Right cardiac atrium (tissue), 5 donors: ENCODE measurements at regions of chr7 and their contacts with region 1.

Region 1: DNA sequence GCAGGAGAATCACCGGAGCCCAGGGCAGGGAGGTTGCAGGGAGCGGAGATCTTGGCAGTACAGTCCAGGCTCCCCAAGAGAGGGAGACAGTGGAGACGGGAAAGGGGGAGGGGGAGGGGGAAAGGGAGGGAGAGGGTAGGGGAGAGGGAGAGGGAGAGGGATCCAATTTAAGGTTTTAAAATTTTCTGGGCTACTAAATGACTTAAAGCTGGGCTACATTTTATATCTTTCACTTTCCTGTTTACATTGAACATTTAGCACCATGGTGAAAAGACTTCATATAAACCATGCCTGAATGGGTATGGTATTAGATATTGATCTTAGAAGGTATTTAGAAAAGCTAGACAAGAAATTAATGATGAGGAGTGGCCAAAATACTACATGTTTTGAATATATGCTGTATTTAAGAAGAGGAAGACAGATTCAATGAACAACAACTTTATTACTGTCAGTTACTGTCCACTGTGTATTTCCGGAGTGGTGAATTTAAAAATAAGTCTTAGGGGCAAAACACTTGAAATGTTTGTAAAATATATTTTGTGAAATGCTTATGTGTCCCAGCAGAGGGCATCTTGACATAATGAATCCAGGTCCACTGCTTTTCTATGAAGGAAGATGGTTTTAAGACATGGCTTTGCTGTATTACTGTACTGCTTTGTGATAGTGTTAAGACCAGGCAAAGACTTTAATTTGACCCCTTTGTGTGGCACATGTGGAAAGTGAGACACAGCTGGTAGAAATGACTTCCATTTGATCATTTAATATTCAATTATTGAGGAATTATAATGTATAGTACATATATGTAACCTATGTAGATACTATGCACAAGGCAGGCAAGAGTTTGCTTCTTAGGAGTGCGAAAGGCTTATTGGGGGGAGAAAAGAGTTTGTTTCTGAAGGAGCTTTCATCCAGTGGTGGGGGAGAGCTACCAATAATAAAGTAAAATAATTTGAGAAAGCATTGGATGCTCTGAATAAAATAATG is 52.8 kb downstream of the NRF1 start:
- DNase-seq: no peak
- ATAC-seq: peak in 1 of 2 donors; percentile 41
- H3K4me3 ChIP-seq: no peak overlapping the region
- H3K27ac ChIP-seq: no peak overlapping the region
- H3K4me1 ChIP-seq: no peaks in the 10 kb centered on the region
- H3K27me3 ChIP-seq: no peaks in the 10 kb centered on the region

Region 2: GRCh38 chr7:129530795-129531391 is 133.4 kb before region 1 on chr7:
- intact Hi-C with region 1: no loop called
- DNase-seq: no peak
- ATAC-seq: no peak
- H3K4me3 ChIP-seq: no peak overlapping the region
- H3K27ac ChIP-seq: no peak overlapping the region
- H3K4me1 ChIP-seq: no peaks in the 10 kb centered on the region
- H3K27me3 ChIP-seq: no peaks in the 10 kb centered on the region

Region 3: GRCh38 chr7:129611246-129612111 is 52.8 kb before region 1 on chr7 and contains the start of gene NRF1:
- intact Hi-C with region 1: no loop called
- DNase-seq: peak; percentile 91 to 97 (median 97)
- ATAC-seq: peak; percentile 98
- H3K4me3 ChIP-seq: peak within 1 kb of the TSS; percentile 97
- H3K27ac ChIP-seq: peak within 1 kb of the TSS; percentile 98
- H3K4me1 ChIP-seq: no peaks in the 10 kb centered on the region
- H3K27me3 ChIP-seq: no peaks in the 10 kb centered on the region
- total RNA-seq, gene NRF1: 16.5 to 20.0 (median 19.4) TPM

Region 4: GRCh38 chr7:129923709-129924108 is 259.4 kb after region 1 on chr7:
- intact Hi-C with region 1: no loop called
- DNase-seq: no peak
- ATAC-seq: peak in 1 of 2 donors; percentile 41
- H3K4me3 ChIP-seq: no peak overlapping the region
- H3K27ac ChIP-seq: no peak overlapping the region
- H3K4me1 ChIP-seq: peaks cover 3% of the 10 kb centered on the region
- H3K27me3 ChIP-seq: no peaks in the 10 kb centered on the region

Region 5: DNA sequence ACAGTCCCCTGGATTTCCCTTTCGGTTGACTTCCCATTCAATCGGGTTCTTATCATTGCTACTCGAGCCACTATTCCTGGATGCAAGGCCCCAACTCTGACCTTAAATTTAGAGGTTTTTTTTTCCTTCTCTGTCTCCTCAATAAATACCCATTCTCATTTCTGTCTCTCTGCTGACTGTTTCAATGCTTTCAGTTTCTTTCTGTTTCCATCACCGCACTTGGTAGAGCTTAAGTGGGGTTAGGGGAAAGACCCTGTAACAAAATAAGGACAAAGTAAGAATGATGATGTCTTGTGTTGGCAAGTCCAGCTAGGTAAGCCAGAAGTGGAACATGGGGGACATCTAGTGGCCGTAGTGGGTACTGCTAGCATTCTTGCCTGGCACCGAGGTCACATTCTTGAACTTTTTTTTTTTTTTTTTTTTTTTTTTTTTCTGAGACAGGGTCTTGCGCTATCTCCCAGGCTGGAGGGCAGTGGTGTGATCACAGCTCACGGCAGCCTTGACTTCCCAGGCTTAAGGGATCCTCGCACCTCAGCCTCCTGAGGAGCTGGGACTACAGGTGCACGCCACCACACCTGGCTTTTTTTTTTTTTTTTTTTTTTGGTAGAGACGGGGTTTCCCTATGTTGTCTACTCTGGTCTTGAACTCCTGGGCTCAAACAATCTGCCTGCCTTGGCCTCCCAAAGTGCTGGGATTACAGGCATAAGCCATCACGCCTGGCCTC is 346.5 kb after region 1 on chr7:
- intact Hi-C with region 1: loop called in 3 of 4 experiments (anchors 10 kb)
- DNase-seq: peak; percentile 68 to 92 (median 80)
- ATAC-seq: peak; percentile 56 to 64
- H3K4me3 ChIP-seq: no peak overlapping the region
- H3K27ac ChIP-seq: no peak overlapping the region
- H3K4me1 ChIP-seq: no peaks in the 10 kb centered on the region
- H3K27me3 ChIP-seq: no peaks in the 10 kb centered on the region